ENCODE measurements at regions of chr19 and their contacts with region 1.

Region 1: GRCh38 chr19:50922317-50922853 is 11.2 kb upstream of the KLK4 start:
- DNase-seq: peak; percentile 59
- ATAC-seq: peak; percentile 99
- H3K4me3 Mint-ChIP-seq: no peak overlapping the region
- H3K27ac Mint-ChIP-seq: no peak overlapping the region
- H3K4me1 Mint-ChIP-seq: peaks cover 10% of the 10 kb centered on the region
- H3K27me3 Mint-ChIP-seq: peaks cover 24% of the 10 kb centered on the region
- CTCF ChIP-seq: peak; percentile 61

Region 2: GRCh38 chr19:50669302-50670101 is 252.9 kb before region 1 on chr19:
- CTCF ChIA-PET with region 1: interaction called, 6 read pairs
- POLR2A ChIA-PET with region 1: no interaction called
- intact Hi-C with region 1: loop called (anchors 1 kb)
- DNase-seq: peak; percentile 34
- ATAC-seq: peak; percentile 31
- H3K4me3 Mint-ChIP-seq: no peak overlapping the region
- H3K27ac Mint-ChIP-seq: no peak overlapping the region
- H3K4me1 Mint-ChIP-seq: peaks cover 4% of the 10 kb centered on the region
- H3K27me3 Mint-ChIP-seq: peaks cover 44% of the 10 kb centered on the region
- CTCF ChIP-seq: peak; percentile 73

Region 3: GRCh38 chr19:50724522-50725217 is 197.7 kb before region 1 on chr19:
- CTCF ChIA-PET with region 1: interaction called, 7 read pairs
- POLR2A ChIA-PET with region 1: interaction called, 10 read pairs
- intact Hi-C with region 1: loop called (anchors 5 kb)
- DNase-seq: peak; percentile 75
- ATAC-seq: peak; percentile 91
- H3K4me3 Mint-ChIP-seq: peak overlapping the region; percentile 78
- H3K27ac Mint-ChIP-seq: no peak overlapping the region
- H3K4me1 Mint-ChIP-seq: peaks cover 37% of the 10 kb centered on the region
- H3K27me3 Mint-ChIP-seq: peaks cover 66% of the 10 kb centered on the region
- CTCF ChIP-seq: no peak

Region 4: GRCh38 chr19:50794439-50795237 is 127.7 kb before region 1 on chr19:
- CTCF ChIA-PET with region 1: interaction called, 13 read pairs
- POLR2A ChIA-PET with region 1: interaction called, 6 read pairs
- intact Hi-C with region 1: loop called (anchors 1 kb)
- DNase-seq: no peak
- ATAC-seq: peak; percentile 64
- H3K4me3 Mint-ChIP-seq: no peak overlapping the region
- H3K27ac Mint-ChIP-seq: peak overlapping the region; percentile 24
- H3K4me1 Mint-ChIP-seq: peaks cover 9% of the 10 kb centered on the region
- H3K27me3 Mint-ChIP-seq: no peaks in the 10 kb centered on the region
- CTCF ChIP-seq: no peak

Region 5: GRCh38 chr19:50882183-50882582 is 40.2 kb before region 1 on chr19:
- CTCF ChIA-PET with region 1: interaction called, 9 read pairs
- POLR2A ChIA-PET with region 1: no interaction called
- intact Hi-C with region 1: loop called (anchors 1 kb)
- DNase-seq: no peak
- ATAC-seq: no peak
- H3K4me3 Mint-ChIP-seq: no peak overlapping the region
- H3K27ac Mint-ChIP-seq: no peak overlapping the region
- H3K4me1 Mint-ChIP-seq: peaks cover 7% of the 10 kb centered on the region
- H3K27me3 Mint-ChIP-seq: peaks cover 6% of the 10 kb centered on the region
- CTCF ChIP-seq: no peak

Region 6: DNA sequence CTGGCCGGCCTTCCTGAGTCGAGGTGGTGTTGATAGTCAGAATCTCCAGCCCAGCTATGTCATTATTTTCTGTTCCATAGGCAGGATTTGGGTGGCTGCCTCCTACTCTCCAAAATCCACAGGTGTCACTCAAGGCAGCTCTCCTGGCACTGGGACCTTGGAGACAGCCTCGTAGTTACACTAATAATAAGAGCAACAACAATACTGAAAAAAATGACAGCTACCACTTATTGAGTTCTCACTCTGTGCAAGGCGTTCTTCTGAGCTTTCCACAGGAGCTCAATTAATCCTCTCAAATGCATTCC is 124.6 kb after region 1 on chr19:
- CTCF ChIA-PET with region 1: no interaction called
- POLR2A ChIA-PET with region 1: no interaction called
- intact Hi-C with region 1: no loop called
- DNase-seq: no peak
- ATAC-seq: no peak
- H3K4me3 Mint-ChIP-seq: no peak overlapping the region
- H3K27ac Mint-ChIP-seq: no peak overlapping the region
- H3K4me1 Mint-ChIP-seq: no peaks in the 10 kb centered on the region
- H3K27me3 Mint-ChIP-seq: peaks cover 9% of the 10 kb centered on the region
- CTCF ChIP-seq: no peak

Measured in activated B cell treated with CpG ODN at 0.5 μM for 24 hours (primary cell).